K562 (cell line): ENCODE measurements at regions of chr16 and their contacts with region 1.

Region 1: GRCh38 chr16:50368410-50369132 is at the start of gene BRD7:
- DNase-seq: peak; percentile 74 to 93 (median 91)
- ATAC-seq: peak; percentile 82
- H3K4me3 ChIP-seq: peak within 1 kb of the TSS; percentile 87
- H3K27ac ChIP-seq: peak within 1 kb of the TSS; percentile 72
- H3K4me1 ChIP-seq: peaks cover 12 to 15% of the 10 kb centered on the region in 2 experiments
- H3K27me3 ChIP-seq: peaks cover 0 to 11% of the 10 kb centered on the region in 2 experiments; a peak in 2 of 5 replicates
- CTCF ChIP-seq: peak in 2 of 3 experiments; percentile 51 to 68; a peak in 3 of 6 replicates
- EP300 ChIP-seq: no peak
- POLR2A ChIP-seq: no peak
- RAD21 ChIP-seq: no peak
- polyA plus RNA-seq, gene BRD7: 20.6 to 26.3 TPM

Region 2: DNA sequence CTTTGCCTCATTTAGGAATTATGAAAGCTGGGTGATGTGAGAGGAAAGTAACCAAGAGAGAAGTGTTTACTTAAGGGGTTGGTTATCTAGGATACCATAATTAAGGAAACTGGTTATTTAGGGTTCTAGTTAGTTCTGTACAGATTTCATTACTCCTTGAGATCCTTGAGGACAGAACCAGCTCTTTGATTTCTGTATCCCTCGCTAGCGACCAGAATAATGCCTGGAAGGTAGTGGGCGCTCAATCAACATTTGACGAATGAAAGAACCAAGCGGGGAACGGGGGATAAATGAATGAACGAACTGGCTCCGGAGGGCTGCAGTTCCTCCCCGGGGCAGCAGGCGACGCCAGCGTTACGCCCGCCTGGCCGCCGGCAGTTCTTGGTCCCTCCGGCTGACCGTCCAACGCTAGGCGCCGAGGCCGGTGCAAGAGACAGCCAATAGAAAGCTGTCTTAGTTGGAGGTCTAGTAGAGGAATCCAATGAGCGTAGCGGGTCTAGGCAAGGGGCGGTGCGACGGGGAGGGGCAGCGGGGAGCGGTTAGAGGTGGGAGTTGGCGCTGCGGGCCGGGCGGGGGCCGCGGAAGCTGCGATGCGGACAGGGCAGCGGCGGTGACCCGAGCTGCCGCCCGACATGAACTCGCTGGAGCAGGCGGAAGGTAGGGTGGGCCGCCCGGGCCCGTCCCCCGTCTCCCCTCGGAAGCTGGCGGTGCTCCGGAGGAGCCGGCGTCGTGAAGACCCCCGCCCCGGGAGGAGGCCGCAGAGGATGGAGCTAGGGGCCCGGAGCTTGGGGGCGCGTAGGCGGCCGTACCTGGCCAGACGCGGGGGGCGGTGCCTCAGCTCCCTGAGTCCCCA is 343.7 kb before region 1 on chr16 and contains the start of gene CNEP1R1:
- CTCF ChIA-PET with region 1: no interaction called
- POLR2A ChIA-PET with region 1: no interaction called
- in situ Hi-C with region 1: loop called (anchors 10 kb)
- intact Hi-C with region 1: no loop called
- DNase-seq: peak; percentile 97 to 99 (median 99)
- ATAC-seq: peak; percentile 98
- H3K4me3 ChIP-seq: peak within 1 kb of the TSS; percentile 92
- H3K27ac ChIP-seq: peak within 1 kb of the TSS; percentile 70
- H3K4me1 ChIP-seq: peaks cover 0 to 9% of the 10 kb centered on the region in 2 experiments; a peak in 3 of 5 replicates
- H3K27me3 ChIP-seq: no peaks in the 10 kb centered on the region
- CTCF ChIP-seq: peak; percentile 97 to 100 (median 99)
- EP300 ChIP-seq: peak; percentile 55
- POLR2A ChIP-seq: peak; percentile 69
- RAD21 ChIP-seq: peak; percentile 97 to 98
- polyA plus RNA-seq, gene CNEP1R1: 9.7 to 10.8 TPM

Region 3: GRCh38 chr16:50509521-50510341 is 141.2 kb after region 1 on chr16:
- CTCF ChIA-PET with region 1: no interaction called
- POLR2A ChIA-PET with region 1: no interaction called
- in situ Hi-C with region 1: no loop called
- intact Hi-C with region 1: loop called (anchors 1 kb)
- DNase-seq: peak; percentile 51 to 56 (median 52)
- ATAC-seq: peak; percentile 75
- H3K4me3 ChIP-seq: no peak overlapping the region
- H3K27ac ChIP-seq: no peak overlapping the region
- H3K4me1 ChIP-seq: no peaks in the 10 kb centered on the region
- H3K27me3 ChIP-seq: peaks cover 12 to 19% of the 10 kb centered on the region in 2 experiments; a peak in 2 of 5 replicates
- CTCF ChIP-seq: peak; percentile 64 to 90 (median 79)
- EP300 ChIP-seq: no peak
- POLR2A ChIP-seq: no peak
- RAD21 ChIP-seq: peak; percentile 71 to 87

Region 4: DNA sequence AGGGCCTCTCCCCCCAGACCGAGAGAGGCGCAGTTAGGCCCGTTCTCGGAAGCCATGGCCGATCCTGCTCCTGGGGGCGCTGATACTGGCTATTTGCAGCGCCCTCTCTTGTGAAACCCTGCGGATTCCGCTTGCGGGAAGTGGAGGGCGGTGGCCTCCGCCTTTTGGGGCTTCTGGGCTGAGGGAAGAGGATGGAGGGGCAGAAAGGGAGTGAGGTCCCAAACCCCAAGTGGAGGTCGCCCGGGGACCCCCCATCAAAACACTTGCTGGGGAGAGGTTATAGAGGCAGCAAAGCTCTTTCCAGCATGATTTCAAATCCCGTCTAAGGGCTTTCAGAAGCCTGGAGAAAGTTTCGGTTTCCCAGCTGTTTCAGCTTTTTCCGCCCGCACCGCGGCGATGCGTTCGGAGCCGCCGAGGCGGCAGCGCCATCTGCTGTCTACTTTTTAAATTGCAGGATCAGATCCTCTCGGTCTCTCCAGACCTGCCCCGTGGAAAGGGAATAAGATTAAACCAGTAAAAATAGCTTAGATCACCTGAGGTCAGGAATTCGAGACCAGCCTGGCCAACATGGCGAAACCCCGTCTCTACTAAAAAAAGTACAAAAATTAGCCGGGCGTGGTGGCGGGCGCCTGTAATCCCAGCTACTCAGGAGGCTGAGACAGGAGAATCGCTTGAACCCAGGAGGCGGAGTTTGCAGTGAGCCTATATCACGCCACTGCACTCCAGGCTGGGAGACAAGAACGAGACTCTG is 296.7 kb after region 1 on chr16:
- CTCF ChIA-PET with region 1: no interaction called
- POLR2A ChIA-PET with region 1: no interaction called
- in situ Hi-C with region 1: loop called (anchors 10 kb)
- intact Hi-C with region 1: no loop called
- DNase-seq: peak; percentile 69 to 80 (median 77)
- ATAC-seq: peak; percentile 94
- H3K4me3 ChIP-seq: no peak overlapping the region; the same call in 1 of the 2 replicates
- H3K27ac ChIP-seq: no peak overlapping the region
- H3K4me1 ChIP-seq: peaks cover 0 to 5% of the 10 kb centered on the region in 2 experiments; a peak in 2 of 5 replicates
- H3K27me3 ChIP-seq: peaks cover 4 to 14% of the 10 kb centered on the region in 2 experiments; a peak in 3 of 5 replicates
- CTCF ChIP-seq: peak; percentile 84 to 93 (median 92)
- EP300 ChIP-seq: no peak
- POLR2A ChIP-seq: no peak
- RAD21 ChIP-seq: peak; percentile 87 to 89

Region 5: DNA sequence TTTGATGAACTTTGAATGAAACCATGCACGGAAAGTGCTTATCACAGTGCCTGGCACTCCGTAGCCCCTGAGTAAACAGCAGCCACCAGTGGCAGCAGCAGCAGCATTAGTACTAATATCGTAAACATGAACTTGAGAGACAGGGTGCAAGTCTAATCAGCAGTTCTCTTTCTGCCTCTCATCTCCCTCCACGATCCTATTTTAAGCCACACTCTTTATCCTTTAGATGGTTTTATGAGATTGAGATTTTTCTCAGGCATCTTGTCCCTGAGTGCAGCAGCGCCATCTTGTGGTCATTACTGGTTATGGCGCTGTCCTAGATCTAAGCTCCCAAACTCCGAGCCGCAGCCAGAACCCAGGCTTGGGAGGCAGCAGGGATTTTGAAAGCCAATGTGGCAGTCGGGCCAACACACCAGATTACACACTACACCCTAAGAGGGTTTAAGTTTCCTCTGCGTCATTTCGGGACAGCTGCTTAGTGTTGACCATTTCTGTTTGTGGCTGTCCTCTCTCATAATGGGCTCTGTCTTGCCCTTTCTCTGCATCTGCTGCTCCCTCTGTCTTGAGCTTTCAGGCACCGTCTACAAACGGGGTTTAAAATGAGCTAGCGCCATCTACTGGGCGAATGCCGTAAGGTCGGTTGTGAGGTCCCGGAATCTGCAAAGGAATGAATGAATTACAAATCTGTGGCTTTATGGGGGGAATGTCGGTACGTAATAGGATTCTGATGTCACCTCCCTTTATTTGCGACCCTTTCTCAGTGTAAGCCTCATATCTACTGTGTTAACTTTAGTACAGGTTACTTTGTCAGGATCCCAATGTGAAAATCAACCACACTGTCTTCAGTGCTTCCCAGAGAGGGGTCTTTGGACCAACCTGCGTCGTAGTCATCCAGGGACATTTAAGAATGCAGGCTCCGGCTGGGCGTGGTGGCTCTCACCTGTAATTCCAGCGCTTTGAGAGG is 437.8 kb after region 1 on chr16:
- CTCF ChIA-PET with region 1: interaction called, 4 read pairs
- POLR2A ChIA-PET with region 1: no interaction called
- in situ Hi-C with region 1: loop called (anchors 10 kb)
- intact Hi-C with region 1: loop called (anchors 5 kb)
- DNase-seq: peak; percentile 75 to 81 (median 78)
- ATAC-seq: peak; percentile 95
- H3K4me3 ChIP-seq: no peak overlapping the region
- H3K27ac ChIP-seq: no peak overlapping the region
- H3K4me1 ChIP-seq: no peaks in the 10 kb centered on the region
- H3K27me3 ChIP-seq: peaks cover 2 to 18% of the 10 kb centered on the region in 2 experiments; a peak in 2 of 5 replicates
- CTCF ChIP-seq: peak; percentile 83 to 92 (median 90)
- EP300 ChIP-seq: no peak
- POLR2A ChIP-seq: no peak
- RAD21 ChIP-seq: peak; percentile 72 to 85

Region 6: DNA sequence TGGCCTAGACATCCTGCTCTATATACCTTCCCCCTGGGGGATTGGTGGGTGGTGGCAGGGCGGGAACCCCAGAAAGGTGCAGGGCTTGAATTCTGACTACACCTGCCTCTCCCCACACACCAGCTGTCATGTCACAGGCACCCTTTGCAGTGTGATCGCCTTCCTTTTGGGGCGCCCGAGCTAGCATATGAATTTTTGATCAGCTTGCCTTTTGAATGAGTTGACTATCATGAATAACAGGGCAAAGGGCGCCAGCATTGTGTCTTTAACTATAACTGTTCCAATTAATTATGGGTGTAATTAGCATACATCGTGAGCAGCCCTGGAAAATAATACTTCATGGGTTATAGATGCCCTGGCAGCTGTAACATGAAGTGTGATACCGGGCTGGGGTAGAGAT is 446.0 kb after region 1 on chr16:
- CTCF ChIA-PET with region 1: no interaction called
- POLR2A ChIA-PET with region 1: no interaction called
- in situ Hi-C with region 1: loop called (anchors 10 kb)
- intact Hi-C with region 1: loop called (anchors 5 kb)
- DNase-seq: no peak
- ATAC-seq: 0 out of 3 replicates have a peak, but pooled peaks have one; percentile 29
- H3K4me3 ChIP-seq: no peak overlapping the region
- H3K27ac ChIP-seq: no peak overlapping the region
- H3K4me1 ChIP-seq: no peaks in the 10 kb centered on the region
- H3K27me3 ChIP-seq: peaks cover 4 to 57% of the 10 kb centered on the region in 2 experiments; a peak in 3 of 5 replicates
- CTCF ChIP-seq: peak in 2 of 3 experiments; percentile 18 to 22; a peak in 1 of 6 replicates
- EP300 ChIP-seq: no peak
- POLR2A ChIP-seq: no peak
- RAD21 ChIP-seq: no peak